IMR-90 (cell line): ENCODE measurements at regions of chr4 and their contacts with region 1.

Region 1: DNA sequence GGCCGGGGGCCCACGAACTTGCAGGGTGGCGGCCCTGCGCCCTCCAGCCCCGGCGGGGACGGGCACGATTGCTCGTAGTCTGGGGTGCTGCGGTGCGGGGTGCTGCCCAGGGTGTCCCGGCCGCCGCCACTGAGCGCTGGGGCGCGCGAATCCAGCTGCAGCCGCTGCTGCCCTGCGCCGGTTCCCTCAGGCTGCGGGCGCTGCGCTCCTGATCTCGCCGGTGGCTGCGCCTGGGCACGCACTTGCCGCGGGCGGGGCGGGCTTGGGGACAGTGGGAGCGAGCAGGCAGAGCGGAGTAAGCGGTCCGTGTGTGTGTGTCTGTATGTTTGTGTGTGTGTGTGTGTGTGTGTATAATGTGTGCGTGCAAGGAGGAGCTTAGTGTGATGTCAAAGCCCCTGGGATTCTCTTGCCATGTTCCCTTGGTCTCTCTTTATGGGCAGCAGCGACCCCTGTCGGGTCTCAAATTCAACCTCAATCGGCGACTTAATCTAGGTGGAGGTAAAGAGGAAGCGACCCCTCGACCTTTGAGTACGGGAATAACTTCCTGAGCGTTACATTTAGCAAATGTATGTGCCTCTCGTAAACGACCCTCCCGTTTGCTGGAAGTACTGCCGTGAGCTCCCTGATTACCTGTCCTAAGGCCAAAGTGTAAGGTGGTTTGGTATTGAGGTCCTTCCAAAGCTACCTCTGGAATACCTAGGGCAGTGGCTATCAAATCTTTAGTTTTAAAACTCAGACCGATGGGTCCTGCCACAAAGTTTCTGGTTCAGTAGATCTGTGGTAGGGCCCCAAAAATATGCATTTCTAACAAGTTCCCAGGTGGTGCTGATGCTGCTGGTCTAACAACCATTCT is at the start of gene RNF150:
- DNase-seq: peak; percentile 92
- ATAC-seq: peak; percentile 76
- H3K4me3 ChIP-seq: peak within 1 kb of the TSS; percentile 97
- H3K27ac ChIP-seq: peak within 1 kb of the TSS; percentile 40; the same call in 1 of the 2 replicates
- H3K4me1 ChIP-seq: peaks cover 2% of the 10 kb centered on the region
- H3K27me3 ChIP-seq: 0 out of 2 replicates have a peak, but pooled peaks cover 2% of the 10 kb centered on the region
- CTCF ChIP-seq: peak; percentile 90
- POLR2A ChIP-seq: no peak
- RAD21 ChIP-seq: peak; percentile 94
- total RNA-seq, gene RNF150: 10.6 and 18.1 TPM in 2 replicates

Region 2: DNA sequence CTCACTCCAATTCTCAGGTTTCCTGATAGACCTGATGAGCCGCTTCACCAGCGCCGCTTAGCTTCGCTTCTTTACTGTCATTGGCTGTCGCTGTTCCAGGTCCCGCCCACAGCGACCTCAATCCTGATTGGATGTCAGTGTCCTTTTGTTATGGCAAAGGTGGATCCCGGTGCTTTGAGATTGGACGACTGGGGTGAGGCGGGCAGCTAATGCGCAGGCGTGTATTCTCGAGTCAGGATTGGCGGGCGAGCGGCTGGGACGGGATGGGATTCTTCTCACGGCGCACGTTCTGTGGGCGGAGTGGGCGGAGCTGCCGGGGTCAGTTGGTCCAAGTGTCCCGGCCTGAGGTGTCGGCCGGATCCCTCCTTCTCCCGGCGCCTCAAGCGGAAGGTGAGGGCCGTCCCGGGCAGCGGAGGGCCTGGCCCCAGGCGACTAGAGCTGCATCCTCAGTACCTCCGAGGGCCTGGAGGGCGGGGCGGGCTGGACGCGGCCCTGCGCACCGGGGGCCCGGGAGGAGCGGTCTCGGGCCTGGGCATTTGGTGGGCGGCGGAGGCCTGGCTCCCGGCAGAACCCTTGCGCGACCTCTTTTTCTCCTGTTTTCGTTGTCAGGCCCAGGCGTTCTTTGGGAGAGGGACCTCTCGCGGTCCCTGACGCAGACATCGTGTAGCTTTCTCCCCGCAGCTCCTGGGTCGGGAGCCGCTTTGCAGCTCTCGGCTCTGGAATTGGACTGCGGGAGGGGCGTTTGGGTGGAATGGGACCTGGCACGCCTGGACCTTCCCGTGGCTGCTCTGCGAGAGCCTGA is 759.8 kb before region 1 on chr4 and contains the start of gene SCOC:
- CTCF ChIA-PET with region 1: no interaction called
- POLR2A ChIA-PET with region 1: no interaction called
- dilution Hi-C with region 1: no loop called
- in situ Hi-C with region 1: loop called (anchors 25 kb)
- intact Hi-C with region 1: loop called (anchors 5 kb)
- DNase-seq: peak; percentile 99
- ATAC-seq: peak; percentile 96
- H3K4me3 ChIP-seq: peak within 1 kb of the TSS; percentile 75
- H3K27ac ChIP-seq: peak within 1 kb of the TSS; percentile 63
- H3K4me1 ChIP-seq: no peaks in the 10 kb centered on the region; the same call in 1 of the 2 replicates
- H3K27me3 ChIP-seq: no peaks in the 10 kb centered on the region
- CTCF ChIP-seq: no peak
- POLR2A ChIP-seq: peak; percentile 79
- RAD21 ChIP-seq: no peak
- total RNA-seq, gene SCOC: 12.9 and 51.7 TPM in 2 replicates

Region 3: GRCh38 chr4:140861359-140862176 is 271.8 kb before region 1 on chr4:
- CTCF ChIA-PET with region 1: interaction called, 33 read pairs
- POLR2A ChIA-PET with region 1: no interaction called
- dilution Hi-C with region 1: no loop called
- in situ Hi-C with region 1: loop called (anchors 5 kb)
- intact Hi-C with region 1: loop called (anchors 1 kb)
- DNase-seq: peak; percentile 91
- ATAC-seq: peak; percentile 79
- H3K4me3 ChIP-seq: no peak overlapping the region
- H3K27ac ChIP-seq: no peak overlapping the region
- H3K4me1 ChIP-seq: peaks cover 2% of the 10 kb centered on the region; the same call in 1 of the 2 replicates
- H3K27me3 ChIP-seq: no peaks in the 10 kb centered on the region
- CTCF ChIP-seq: peak; percentile 92
- POLR2A ChIP-seq: peak; percentile 44; the same call in 1 of the 2 replicates
- RAD21 ChIP-seq: peak; percentile 99

Region 4: GRCh38 chr4:140943486-140944198 is 189.7 kb before region 1 on chr4:
- CTCF ChIA-PET with region 1: interaction called, 4 read pairs
- POLR2A ChIA-PET with region 1: no interaction called
- dilution Hi-C with region 1: no loop called
- in situ Hi-C with region 1: no loop called
- intact Hi-C with region 1: loop called (anchors 5 kb)
- DNase-seq: peak; percentile 77
- ATAC-seq: peak; percentile 77
- H3K4me3 ChIP-seq: no peak overlapping the region
- H3K27ac ChIP-seq: no peak overlapping the region
- H3K4me1 ChIP-seq: peaks cover 6% of the 10 kb centered on the region
- H3K27me3 ChIP-seq: no peaks in the 10 kb centered on the region
- CTCF ChIP-seq: no peak
- POLR2A ChIP-seq: no peak
- RAD21 ChIP-seq: no peak

Region 5: GRCh38 chr4:141046255-141046654 is 87.1 kb before region 1 on chr4:
- CTCF ChIA-PET with region 1: interaction called, 3 read pairs
- POLR2A ChIA-PET with region 1: no interaction called
- dilution Hi-C with region 1: no loop called
- in situ Hi-C with region 1: no loop called
- intact Hi-C with region 1: loop called (anchors 1 kb)
- DNase-seq: peak; percentile 100
- ATAC-seq: peak; percentile 97
- H3K4me3 ChIP-seq: no peak overlapping the region
- H3K27ac ChIP-seq: no peak overlapping the region
- H3K4me1 ChIP-seq: peaks cover 5% of the 10 kb centered on the region; the same call in 1 of the 2 replicates
- H3K27me3 ChIP-seq: no peaks in the 10 kb centered on the region
- CTCF ChIP-seq: no peak
- POLR2A ChIP-seq: no peak; the same call in 1 of the 2 replicates
- RAD21 ChIP-seq: peak; percentile 14; the same call in 1 of the 2 replicates

Region 6: DNA sequence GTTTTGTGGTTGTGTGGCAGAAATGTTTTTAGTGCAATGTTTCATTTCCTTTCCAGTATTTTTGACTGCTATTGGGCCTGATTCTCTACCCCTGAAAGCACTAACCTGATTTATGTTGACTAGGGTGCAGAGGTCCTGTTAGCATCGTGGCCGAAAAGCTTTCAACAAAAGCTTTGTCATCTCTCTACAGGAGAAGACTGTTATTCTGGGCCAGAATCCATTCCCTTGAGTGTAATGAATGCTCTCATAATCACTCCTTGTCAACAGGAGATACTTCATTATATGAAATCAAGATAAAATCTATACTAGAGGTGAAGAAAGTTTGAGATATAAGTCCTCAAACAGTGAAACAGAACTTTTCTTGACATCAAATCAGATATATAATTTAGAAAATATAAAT is 282.8 kb after region 1 on chr4:
- CTCF ChIA-PET with region 1: no interaction called
- POLR2A ChIA-PET with region 1: no interaction called
- dilution Hi-C with region 1: no loop called
- in situ Hi-C with region 1: no loop called
- intact Hi-C with region 1: no loop called
- DNase-seq: peak; percentile 31
- ATAC-seq: no peak
- H3K4me3 ChIP-seq: no peak overlapping the region
- H3K27ac ChIP-seq: peak overlapping the region; percentile 15; the same call in 1 of the 2 replicates
- H3K4me1 ChIP-seq: peaks cover 15% of the 10 kb centered on the region
- H3K27me3 ChIP-seq: no peaks in the 10 kb centered on the region
- CTCF ChIP-seq: no peak
- POLR2A ChIP-seq: no peak
- RAD21 ChIP-seq: no peak